ENCODE measurements at regions of chr5 and their contacts with region 1.

Region 1: GRCh38 chr5:68252673-68253623 is 37.4 kb downstream of the PIK3R1 start:
- DNase-seq: no peak
- ATAC-seq: peak; percentile 63

Region 2: GRCh38 chr5:67815455-67816391 is 437.2 kb before region 1 on chr5:
- intact Hi-C with region 1: loop called (anchors 10 kb)
- DNase-seq: peak; percentile 39
- ATAC-seq: peak; percentile 95

Region 3: GRCh38 chr5:68382640-68383039 is 129.7 kb after region 1 on chr5:
- intact Hi-C with region 1: no loop called
- DNase-seq: no peak
- ATAC-seq: no peak